IMR-90 (cell line): ENCODE measurements at regions of chr6 and their contacts with region 1.

Region 1: DNA sequence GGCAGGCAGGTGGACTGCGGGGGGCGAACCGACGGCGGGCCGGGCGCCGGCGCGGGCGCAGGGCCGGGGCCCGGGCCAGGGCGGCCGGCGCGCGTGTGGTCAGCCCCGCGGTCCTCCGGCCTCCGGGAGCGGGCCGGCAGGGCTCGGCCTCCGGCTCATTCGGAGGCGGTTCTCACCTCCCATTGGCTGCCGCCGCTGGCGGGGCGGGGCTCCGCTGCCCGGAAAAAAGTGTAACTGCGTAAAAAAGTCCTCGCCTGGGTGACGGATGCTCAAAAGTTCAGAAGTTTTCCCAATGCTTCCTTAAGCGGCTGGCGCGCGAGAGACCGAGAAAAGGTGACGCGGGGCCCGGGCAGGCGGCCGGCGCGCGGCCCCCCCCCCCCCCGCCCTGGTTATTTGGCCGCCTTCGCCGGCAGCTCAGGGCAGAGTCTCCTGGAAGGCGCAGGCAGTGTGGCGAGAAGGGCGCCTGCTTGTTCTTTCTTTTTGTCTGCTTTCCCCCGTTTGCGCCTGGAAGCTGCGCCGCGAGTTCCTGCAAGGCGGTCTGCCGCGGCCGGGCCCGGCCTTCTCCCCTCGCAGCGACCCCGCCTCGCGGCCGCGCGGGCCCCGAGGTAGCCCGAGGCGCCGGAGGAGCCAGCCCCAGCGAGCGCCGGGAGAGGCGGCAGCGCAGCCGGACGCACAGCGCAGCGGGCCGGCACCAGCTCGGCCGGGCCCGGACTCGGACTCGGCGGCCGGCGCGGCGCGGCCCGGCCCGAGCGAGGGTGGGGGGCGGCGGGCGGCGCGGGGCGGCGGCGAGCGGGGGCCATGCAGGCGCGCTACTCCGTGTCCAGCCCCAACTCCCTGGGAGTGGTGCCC is at the start of gene FOXC1:
- DNase-seq: peak; percentile 94
- ATAC-seq: peak; percentile 85
- H3K4me3 ChIP-seq: peak within 1 kb of the TSS; percentile 85
- H3K27ac ChIP-seq: peak within 1 kb of the TSS; percentile 99
- H3K4me1 ChIP-seq: peaks cover 2% of the 10 kb centered on the region; the same call in 1 of the 2 replicates
- H3K27me3 ChIP-seq: peaks cover 28% of the 10 kb centered on the region
- CTCF ChIP-seq: no peak
- POLR2A ChIP-seq: peak; percentile 84
- RAD21 ChIP-seq: no peak; the same call in 1 of the 2 replicates
- total RNA-seq, gene FOXC1: 1.3 and 1.9 TPM in 2 replicates

Region 2: DNA sequence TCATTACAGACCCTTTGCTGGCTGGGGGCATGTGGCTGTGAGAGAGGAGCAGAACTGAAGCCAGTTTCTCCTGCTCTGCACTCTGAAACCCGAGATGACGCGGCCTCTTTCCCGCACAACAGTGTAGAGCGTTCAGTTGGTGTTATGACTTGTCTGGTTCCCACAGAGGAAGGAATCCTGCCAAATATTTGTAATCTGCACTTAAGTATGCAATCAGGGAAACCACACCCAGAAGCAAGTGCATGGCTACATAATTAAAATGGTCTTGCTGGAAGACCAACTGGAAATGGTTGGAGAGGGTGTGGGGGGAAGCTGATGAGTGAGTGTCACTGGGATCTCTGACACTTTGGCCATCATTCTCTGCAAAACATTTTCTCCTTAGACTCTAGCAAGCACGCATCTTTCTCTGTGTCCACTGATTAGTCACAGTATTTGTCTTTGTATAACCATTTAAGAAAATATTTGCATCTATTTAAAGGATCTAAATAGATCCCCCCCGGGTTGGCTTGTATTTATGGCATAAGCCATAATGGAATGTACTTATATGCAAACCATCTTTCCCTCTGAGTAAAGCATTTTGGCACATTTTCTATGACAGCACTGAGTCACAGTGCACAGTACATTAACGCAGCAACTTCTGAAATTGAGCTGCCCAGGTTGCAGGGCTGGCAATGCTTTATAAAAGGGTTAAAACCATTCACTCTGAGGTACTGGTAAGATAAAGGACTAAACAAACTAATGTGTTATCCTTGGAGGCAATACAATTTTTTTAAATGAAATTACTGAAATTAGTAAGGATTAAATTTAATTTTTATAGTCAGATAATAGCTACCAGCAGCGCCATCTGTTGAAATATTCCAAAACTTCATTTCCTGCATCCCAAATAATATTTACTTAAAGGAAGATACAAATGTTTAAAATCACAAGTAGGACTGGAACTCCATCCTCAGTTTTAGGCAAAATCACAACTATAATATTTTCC is 76.5 kb after region 1 on chr6:
- CTCF ChIA-PET with region 1: interaction called, 9 read pairs
- POLR2A ChIA-PET with region 1: no interaction called
- dilution Hi-C with region 1: no loop called
- in situ Hi-C with region 1: no loop called
- intact Hi-C with region 1: loop called (anchors 1 kb)
- DNase-seq: peak; percentile 96
- ATAC-seq: peak; percentile 89
- H3K4me3 ChIP-seq: no peak overlapping the region
- H3K27ac ChIP-seq: peak overlapping the region; percentile 83
- H3K4me1 ChIP-seq: peaks cover 14% of the 10 kb centered on the region
- H3K27me3 ChIP-seq: no peaks in the 10 kb centered on the region
- CTCF ChIP-seq: peak; percentile 50
- POLR2A ChIP-seq: no peak; the same call in 1 of the 2 replicates
- RAD21 ChIP-seq: peak; percentile 19; the same call in 1 of the 2 replicates

Region 3: DNA sequence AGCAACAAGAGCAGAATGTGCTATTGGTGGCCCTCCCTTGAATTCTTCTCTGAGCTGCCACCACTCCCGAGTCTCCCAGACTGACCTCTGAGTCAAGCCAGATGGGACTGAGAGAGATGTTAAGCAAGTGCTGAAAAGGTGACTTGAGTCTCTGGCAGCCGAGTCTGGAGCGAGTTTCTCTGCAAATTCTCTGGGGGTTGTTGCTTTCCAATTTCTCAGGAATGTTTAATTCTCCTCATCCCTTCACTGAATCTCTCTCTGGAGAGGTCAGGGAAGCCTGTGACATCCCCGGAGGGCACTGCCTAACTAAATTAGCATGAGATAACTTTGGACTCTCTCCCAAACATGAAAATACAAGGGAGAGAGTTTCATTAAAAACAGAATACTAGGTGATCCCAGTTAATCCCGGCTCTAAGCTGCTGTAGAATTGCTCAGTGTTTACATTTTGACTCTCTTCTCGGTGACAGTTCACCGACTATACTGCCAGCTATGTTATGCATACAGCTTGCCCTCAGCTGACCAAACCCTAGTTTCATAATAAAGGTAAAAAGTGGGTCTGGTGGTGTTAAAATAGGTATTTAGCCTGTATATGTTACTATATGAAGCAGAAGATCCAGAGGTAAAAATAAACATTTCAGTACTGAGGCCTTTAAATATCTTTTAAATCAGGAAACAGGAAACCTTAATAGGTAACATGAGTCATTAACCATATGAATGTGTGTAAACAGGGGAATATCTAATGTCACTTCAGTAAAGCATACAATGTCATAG is 157.8 kb after region 1 on chr6:
- CTCF ChIA-PET with region 1: interaction called, 4 read pairs
- POLR2A ChIA-PET with region 1: no interaction called
- dilution Hi-C with region 1: no loop called
- in situ Hi-C with region 1: no loop called
- intact Hi-C with region 1: loop called (anchors 5 kb)
- DNase-seq: peak; percentile 46
- ATAC-seq: peak; percentile 68
- H3K4me3 ChIP-seq: no peak overlapping the region
- H3K27ac ChIP-seq: no peak overlapping the region
- H3K4me1 ChIP-seq: peaks cover 11% of the 10 kb centered on the region
- H3K27me3 ChIP-seq: no peaks in the 10 kb centered on the region
- CTCF ChIP-seq: no peak
- POLR2A ChIP-seq: no peak
- RAD21 ChIP-seq: no peak

Region 4: DNA sequence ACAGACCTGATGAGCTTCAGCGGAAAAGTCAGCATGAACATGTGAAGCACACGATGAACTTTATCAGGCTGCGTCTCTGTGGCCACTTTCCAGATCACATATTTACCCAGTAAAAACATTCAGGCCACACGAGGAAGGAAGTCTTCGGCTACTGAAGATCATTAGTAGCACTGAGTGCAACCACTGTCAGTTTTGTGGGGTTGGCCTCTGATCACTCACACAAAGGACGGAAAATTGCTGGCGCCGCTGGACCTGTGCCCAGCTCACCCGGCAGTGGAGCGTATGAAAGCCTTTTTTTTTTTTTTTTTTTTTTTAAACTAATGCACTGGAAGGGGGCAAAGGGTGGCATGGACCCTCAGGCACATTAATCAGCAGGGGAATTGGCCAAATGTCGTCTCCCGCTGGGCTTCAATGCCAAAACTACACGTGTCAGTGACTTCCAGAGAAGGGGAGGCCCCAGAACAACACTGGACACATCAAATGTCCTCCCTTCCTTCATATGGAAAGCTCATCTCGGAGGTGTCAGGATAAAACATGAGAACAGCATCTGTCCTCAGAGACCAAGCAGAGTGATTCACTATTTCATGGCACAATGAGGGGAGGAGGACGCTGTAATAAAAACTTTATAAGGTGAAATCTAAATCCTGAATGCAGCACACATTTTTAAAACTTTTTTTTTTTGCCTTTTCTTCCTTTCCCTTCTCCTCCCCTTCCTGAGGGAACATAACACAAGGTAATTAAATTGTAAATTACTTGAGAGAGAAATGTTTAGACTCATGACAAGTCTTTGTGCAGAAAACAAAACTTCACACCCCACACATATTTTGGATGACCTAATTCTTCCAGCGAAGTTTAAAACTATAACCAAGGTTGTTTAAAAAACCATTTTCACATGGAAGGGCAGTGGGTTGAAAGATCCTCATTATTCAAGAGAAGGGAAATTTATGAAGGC is 223.2 kb after region 1 on chr6:
- CTCF ChIA-PET with region 1: no interaction called
- POLR2A ChIA-PET with region 1: no interaction called
- dilution Hi-C with region 1: no loop called
- in situ Hi-C with region 1: no loop called
- intact Hi-C with region 1: no loop called
- DNase-seq: peak; percentile 12
- ATAC-seq: no peak
- H3K4me3 ChIP-seq: no peak overlapping the region
- H3K27ac ChIP-seq: no peak overlapping the region
- H3K4me1 ChIP-seq: peaks cover 7% of the 10 kb centered on the region
- H3K27me3 ChIP-seq: no peaks in the 10 kb centered on the region
- CTCF ChIP-seq: no peak
- POLR2A ChIP-seq: no peak
- RAD21 ChIP-seq: no peak

Region 5: GRCh38 chr6:1872649-1873131 is 262.8 kb after region 1 on chr6:
- CTCF ChIA-PET with region 1: no interaction called
- POLR2A ChIA-PET with region 1: no interaction called
- dilution Hi-C with region 1: no loop called
- in situ Hi-C with region 1: no loop called
- intact Hi-C with region 1: loop called (anchors 5 kb)
- DNase-seq: peak; percentile 79
- ATAC-seq: peak; percentile 92
- H3K4me3 ChIP-seq: no peak overlapping the region
- H3K27ac ChIP-seq: no peak overlapping the region
- H3K4me1 ChIP-seq: peaks cover 4% of the 10 kb centered on the region
- H3K27me3 ChIP-seq: no peaks in the 10 kb centered on the region
- CTCF ChIP-seq: no peak
- POLR2A ChIP-seq: no peak
- RAD21 ChIP-seq: no peak

Region 6: GRCh38 chr6:2037237-2037926 is 427.5 kb after region 1 on chr6:
- CTCF ChIA-PET with region 1: no interaction called
- POLR2A ChIA-PET with region 1: no interaction called
- dilution Hi-C with region 1: no loop called
- in situ Hi-C with region 1: no loop called
- intact Hi-C with region 1: loop called (anchors 10 kb)
- DNase-seq: peak; percentile 28
- ATAC-seq: no peak
- H3K4me3 ChIP-seq: no peak overlapping the region
- H3K27ac ChIP-seq: no peak overlapping the region
- H3K4me1 ChIP-seq: peaks cover 7% of the 10 kb centered on the region; the same call in 1 of the 2 replicates
- H3K27me3 ChIP-seq: no peaks in the 10 kb centered on the region
- CTCF ChIP-seq: peak; percentile 15; the same call in 1 of the 2 replicates
- POLR2A ChIP-seq: no peak
- RAD21 ChIP-seq: peak; percentile 38

Region 7: GRCh38 chr6:2081155-2082138 is 471.6 kb after region 1 on chr6:
- CTCF ChIA-PET with region 1: no interaction called
- POLR2A ChIA-PET with region 1: no interaction called
- dilution Hi-C with region 1: no loop called
- in situ Hi-C with region 1: no loop called
- intact Hi-C with region 1: no loop called
- DNase-seq: no peak
- ATAC-seq: no peak
- H3K4me3 ChIP-seq: no peak overlapping the region
- H3K27ac ChIP-seq: no peak overlapping the region
- H3K4me1 ChIP-seq: no peaks in the 10 kb centered on the region
- H3K27me3 ChIP-seq: no peaks in the 10 kb centered on the region
- CTCF ChIP-seq: no peak
- POLR2A ChIP-seq: no peak
- RAD21 ChIP-seq: no peak

Region 8: GRCh38 chr6:2186516-2186915 is 576.6 kb after region 1 on chr6:
- CTCF ChIA-PET with region 1: no interaction called
- POLR2A ChIA-PET with region 1: no interaction called
- dilution Hi-C with region 1: no loop called
- in situ Hi-C with region 1: loop called (anchors 10 kb)
- intact Hi-C with region 1: no loop called
- DNase-seq: no peak
- ATAC-seq: no peak
- H3K4me3 ChIP-seq: no peak overlapping the region
- H3K27ac ChIP-seq: no peak overlapping the region
- H3K4me1 ChIP-seq: peaks cover 2% of the 10 kb centered on the region
- H3K27me3 ChIP-seq: no peaks in the 10 kb centered on the region
- CTCF ChIP-seq: no peak
- POLR2A ChIP-seq: no peak
- RAD21 ChIP-seq: no peak

Region 9: GRCh38 chr6:2634139-2634964 is 1024.5 kb after region 1 on chr6:
- CTCF ChIA-PET with region 1: no interaction called
- POLR2A ChIA-PET with region 1: no interaction called
- dilution Hi-C with region 1: no loop called
- in situ Hi-C with region 1: no loop called
- intact Hi-C with region 1: loop called (anchors 1 kb)
- DNase-seq: peak; percentile 81
- ATAC-seq: peak; percentile 88
- H3K4me3 ChIP-seq: peak overlapping the region; percentile 17; the same call in 1 of the 2 replicates
- H3K27ac ChIP-seq: peak overlapping the region; percentile 24
- H3K4me1 ChIP-seq: peaks cover 19% of the 10 kb centered on the region
- H3K27me3 ChIP-seq: peaks cover under 1% of the 10 kb centered on the region
- CTCF ChIP-seq: peak; percentile 97
- POLR2A ChIP-seq: 0 out of 2 replicates have a peak, but pooled peaks have one; percentile 33
- RAD21 ChIP-seq: peak; percentile 94